ENCODE measurements at regions of chr14 and their contacts with region 1.

Region 1: DNA sequence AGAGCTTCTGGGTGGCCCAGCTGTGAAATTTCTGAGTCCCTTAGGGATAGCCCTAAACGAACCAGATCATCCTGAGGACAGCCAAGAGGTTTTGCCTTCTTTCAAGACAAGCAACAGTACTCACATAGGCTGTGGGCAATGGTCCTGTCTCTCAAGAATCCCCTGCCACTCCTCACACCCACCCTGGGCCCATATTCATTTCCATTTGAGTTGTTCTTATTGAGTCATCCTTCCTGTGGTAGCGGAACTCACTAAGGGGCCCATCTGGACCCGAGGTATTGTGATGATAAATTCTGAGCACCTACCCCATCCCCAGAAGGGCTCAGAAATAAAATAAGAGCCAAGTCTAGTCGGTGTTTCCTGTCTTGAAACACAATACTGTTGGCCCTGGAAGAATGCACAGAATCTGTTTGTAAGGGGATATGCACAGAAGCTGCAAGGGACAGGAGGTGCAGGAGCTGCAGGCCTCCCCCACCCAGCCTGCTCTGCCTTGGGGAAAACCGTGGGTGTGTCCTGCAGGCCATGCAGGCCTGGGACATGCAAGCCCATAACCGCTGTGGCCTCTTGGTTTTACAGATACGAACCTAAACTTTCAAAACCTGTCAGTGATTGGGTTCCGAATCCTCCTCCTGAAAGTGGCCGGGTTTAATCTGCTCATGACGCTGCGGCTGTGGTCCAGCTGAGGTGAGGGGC is 38.9 kb downstream of the DAD1 start:
- DNase-seq: no peak
- ATAC-seq: peak; percentile 85
- H3K4me3 Mint-ChIP-seq: peak overlapping the region; percentile 72
- H3K27ac Mint-ChIP-seq: peak overlapping the region; percentile 90
- H3K4me1 Mint-ChIP-seq: peaks cover 80% of the 10 kb centered on the region
- H3K27me3 Mint-ChIP-seq: no peaks in the 10 kb centered on the region
- CTCF ChIP-seq: no peak

Region 2: GRCh38 chr14:22478670-22479069 is 71.5 kb before region 1 on chr14:
- CTCF ChIA-PET with region 1: interaction called, 52 read pairs
- POLR2A ChIA-PET with region 1: interaction called, 243 read pairs
- intact Hi-C with region 1: no loop called
- DNase-seq: no peak
- ATAC-seq: no peak
- H3K4me3 Mint-ChIP-seq: peak overlapping the region; percentile 42
- H3K27ac Mint-ChIP-seq: peak overlapping the region; percentile 85
- H3K4me1 Mint-ChIP-seq: peaks cover 98% of the 10 kb centered on the region
- H3K27me3 Mint-ChIP-seq: no peaks in the 10 kb centered on the region
- CTCF ChIP-seq: no peak

Region 3: GRCh38 chr14:22491683-22492621 is 58.2 kb before region 1 on chr14:
- CTCF ChIA-PET with region 1: interaction called, 24 read pairs
- POLR2A ChIA-PET with region 1: interaction called, 64 read pairs
- intact Hi-C with region 1: no loop called
- DNase-seq: no peak
- ATAC-seq: peak; percentile 37
- H3K4me3 Mint-ChIP-seq: peak overlapping the region; percentile 42
- H3K27ac Mint-ChIP-seq: peak overlapping the region; percentile 88
- H3K4me1 Mint-ChIP-seq: peaks cover 98% of the 10 kb centered on the region
- H3K27me3 Mint-ChIP-seq: no peaks in the 10 kb centered on the region
- CTCF ChIP-seq: no peak

Region 4: DNA sequence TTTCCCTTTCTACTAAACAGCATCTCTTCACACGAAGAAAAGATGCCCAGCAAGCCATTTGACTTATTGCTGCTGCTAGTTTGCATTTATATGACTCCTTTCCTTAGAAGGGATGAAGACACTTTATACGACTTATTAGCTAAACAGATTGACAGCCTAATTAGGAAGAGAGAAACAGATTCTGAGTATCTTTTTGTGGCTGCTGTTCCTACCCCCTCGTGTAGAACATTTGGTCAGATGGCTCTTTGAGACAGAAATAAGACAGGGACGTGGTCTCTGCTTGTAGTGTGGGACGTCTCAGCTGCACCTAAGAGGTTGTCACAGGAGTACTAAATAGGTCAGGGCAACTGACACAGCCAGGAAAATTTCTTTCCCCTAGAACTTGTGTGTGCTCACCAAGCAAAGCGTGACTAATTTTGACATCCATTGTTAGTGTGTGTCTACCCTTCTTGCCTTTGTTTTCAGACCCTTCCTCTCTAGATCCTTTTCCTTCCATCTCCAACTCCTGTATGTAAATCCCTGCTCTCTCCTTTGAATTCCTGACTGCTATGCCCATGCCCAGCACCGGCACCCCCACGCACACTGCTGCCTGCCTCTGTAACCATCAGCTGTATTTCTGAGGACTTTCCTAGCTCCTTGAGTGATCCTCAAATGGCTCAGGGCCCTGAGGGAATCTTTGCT is 44.3 kb before region 1 on chr14:
- CTCF ChIA-PET with region 1: interaction called, 36 read pairs
- POLR2A ChIA-PET with region 1: interaction called, 98 read pairs
- intact Hi-C with region 1: no loop called
- DNase-seq: no peak
- ATAC-seq: peak; percentile 29
- H3K4me3 Mint-ChIP-seq: peak overlapping the region; percentile 49
- H3K27ac Mint-ChIP-seq: peak overlapping the region; percentile 90
- H3K4me1 Mint-ChIP-seq: peaks cover 70% of the 10 kb centered on the region
- H3K27me3 Mint-ChIP-seq: no peaks in the 10 kb centered on the region
- CTCF ChIP-seq: no peak

Region 5: GRCh38 chr14:22519877-22520685 is 30.0 kb before region 1 on chr14:
- CTCF ChIA-PET with region 1: interaction called, 3 read pairs
- POLR2A ChIA-PET with region 1: interaction called, 29 read pairs
- intact Hi-C with region 1: no loop called
- DNase-seq: no peak
- ATAC-seq: no peak
- H3K4me3 Mint-ChIP-seq: peak overlapping the region; percentile 52
- H3K27ac Mint-ChIP-seq: peak overlapping the region; percentile 88
- H3K4me1 Mint-ChIP-seq: peaks cover 94% of the 10 kb centered on the region
- H3K27me3 Mint-ChIP-seq: no peaks in the 10 kb centered on the region
- CTCF ChIP-seq: no peak

Region 6: DNA sequence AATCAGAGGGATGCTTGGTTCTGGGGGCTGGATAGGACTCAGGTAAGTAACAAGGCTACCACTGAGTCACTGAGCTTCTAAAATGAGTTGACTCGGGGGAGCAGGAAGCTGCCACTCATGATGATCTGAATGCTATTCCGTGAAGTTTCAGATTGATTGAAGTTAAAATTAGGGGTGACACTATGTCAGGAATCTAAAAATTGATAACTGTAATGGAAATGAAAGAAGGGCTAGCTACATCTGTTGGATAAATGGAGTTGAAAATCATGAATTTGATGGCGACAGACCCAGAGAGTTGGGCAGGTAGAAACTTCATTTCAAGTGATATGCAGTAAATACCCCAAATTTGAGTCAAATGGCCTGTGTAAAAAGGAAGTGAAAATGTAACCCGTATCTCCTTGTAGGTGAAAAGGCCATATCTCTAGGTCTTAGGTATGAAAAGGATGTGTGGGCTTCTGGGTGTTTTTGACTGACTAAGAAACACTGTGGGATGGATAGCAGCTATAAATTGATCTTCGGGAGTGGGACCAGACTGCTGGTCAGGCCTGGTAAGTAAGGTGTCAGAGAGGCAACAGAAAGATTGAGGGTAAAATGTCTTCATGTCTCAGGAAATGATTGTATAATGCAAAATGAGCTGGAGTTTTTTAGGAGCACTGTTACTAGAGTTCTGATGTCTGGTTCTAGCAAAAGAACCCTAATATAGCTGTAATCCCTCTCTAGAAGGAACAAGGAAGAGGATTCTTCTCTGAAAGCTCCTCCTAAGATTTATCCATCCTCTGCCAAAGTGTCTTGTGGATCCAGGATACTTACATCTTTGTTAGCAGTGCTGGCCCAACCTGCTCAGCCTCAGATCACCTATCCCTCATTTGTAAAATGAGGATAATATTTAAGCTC is 18.4 kb before region 1 on chr14:
- CTCF ChIA-PET with region 1: interaction called, 48 read pairs
- POLR2A ChIA-PET with region 1: interaction called, 89 read pairs
- intact Hi-C with region 1: no loop called
- DNase-seq: no peak
- ATAC-seq: peak; percentile 79
- H3K4me3 Mint-ChIP-seq: peak overlapping the region; percentile 80
- H3K27ac Mint-ChIP-seq: peak overlapping the region; percentile 93
- H3K4me1 Mint-ChIP-seq: peaks cover 76% of the 10 kb centered on the region
- H3K27me3 Mint-ChIP-seq: no peaks in the 10 kb centered on the region
- CTCF ChIP-seq: no peak

Region 7: DNA sequence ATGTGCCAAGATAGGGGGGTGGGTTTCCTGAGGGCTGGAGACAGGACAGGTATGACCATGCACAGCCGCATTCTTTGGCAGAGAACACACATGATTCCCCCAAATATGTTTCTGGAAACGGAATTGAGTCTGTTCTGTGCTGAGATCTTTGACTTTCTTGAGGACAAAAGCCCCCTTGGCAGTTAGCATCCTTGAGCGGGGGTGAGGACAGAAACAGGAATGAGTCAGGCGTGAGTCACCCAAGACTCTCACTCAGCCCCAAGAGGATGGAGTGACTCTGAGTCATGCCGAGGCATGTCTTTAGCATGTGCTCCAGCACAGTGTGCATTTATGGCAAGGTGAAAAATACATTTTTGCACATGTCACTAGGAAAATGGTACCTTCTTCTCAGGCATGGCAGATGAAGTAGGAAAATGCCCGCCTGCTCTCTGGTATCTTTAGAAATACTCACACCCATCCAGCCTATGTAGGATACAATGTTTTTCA is 13.2 kb before region 1 on chr14:
- CTCF ChIA-PET with region 1: interaction called, 48 read pairs
- POLR2A ChIA-PET with region 1: interaction called, 89 read pairs
- intact Hi-C with region 1: loop called (anchors 1 kb)
- DNase-seq: no peak
- ATAC-seq: peak; percentile 98
- H3K4me3 Mint-ChIP-seq: peak overlapping the region; percentile 63
- H3K27ac Mint-ChIP-seq: peak overlapping the region; percentile 86
- H3K4me1 Mint-ChIP-seq: peaks cover 84% of the 10 kb centered on the region
- H3K27me3 Mint-ChIP-seq: no peaks in the 10 kb centered on the region
- CTCF ChIP-seq: no peak

Region 8: DNA sequence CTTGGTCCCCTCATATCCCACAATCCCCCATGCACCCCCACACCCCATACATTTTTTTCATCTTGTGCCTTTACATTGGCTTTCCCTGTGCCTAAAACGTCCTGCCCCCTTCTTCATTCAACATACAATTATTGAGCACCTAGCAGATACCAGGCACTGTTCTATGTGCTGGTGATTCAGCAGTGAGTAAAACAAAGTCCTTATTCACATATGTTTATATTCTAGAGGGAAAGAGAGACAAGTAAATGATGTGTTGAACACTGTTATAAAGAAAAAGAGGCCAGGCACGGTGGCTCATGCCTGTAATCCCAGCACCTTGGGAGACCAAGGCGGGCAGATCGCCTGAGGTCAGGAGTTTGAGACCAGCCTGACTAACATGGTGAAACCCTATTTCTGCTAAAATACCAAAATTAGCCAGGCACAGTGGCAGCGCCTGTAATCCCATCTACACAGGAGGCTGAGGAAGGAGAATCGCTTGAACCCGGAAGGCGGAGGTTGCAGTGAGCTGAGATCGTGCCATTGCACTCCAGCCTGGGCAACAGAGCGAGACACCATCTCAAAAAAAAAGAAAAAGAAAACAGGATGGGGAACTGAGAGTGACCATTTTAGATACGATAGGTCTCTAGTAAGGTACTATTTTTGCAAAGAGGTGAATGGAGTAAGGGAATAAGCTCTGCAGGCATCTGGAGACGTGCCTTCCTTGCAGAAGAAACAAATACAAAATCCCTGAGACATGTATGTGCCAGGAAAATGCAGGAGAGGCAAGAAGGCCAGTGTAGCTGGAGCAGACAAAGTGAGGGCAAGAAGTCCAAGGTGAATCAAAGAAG is 252.9 kb after region 1 on chr14:
- CTCF ChIA-PET with region 1: no interaction called
- POLR2A ChIA-PET with region 1: no interaction called
- intact Hi-C with region 1: no loop called
- DNase-seq: no peak
- ATAC-seq: peak; percentile 87
- H3K4me3 Mint-ChIP-seq: peak overlapping the region; percentile 74
- H3K27ac Mint-ChIP-seq: peak overlapping the region; percentile 93
- H3K4me1 Mint-ChIP-seq: peaks cover 81% of the 10 kb centered on the region
- H3K27me3 Mint-ChIP-seq: no peaks in the 10 kb centered on the region
- CTCF ChIP-seq: no peak